Body of pancreas (tissue), 4 donors: ENCODE measurements at regions of chr18 and their contacts with region 1.

Region 1: GRCh38 chr18:54647176-54647575 is 56.1 kb downstream of the DYNAP start:
- DNase-seq: peak; percentile 25 to 54 (median 32)
- ATAC-seq: peak; percentile 55
- H3K4me3 ChIP-seq: no peak overlapping the region
- H3K27ac ChIP-seq: no peak overlapping the region
- H3K4me1 ChIP-seq: no peaks in the 10 kb centered on the region
- H3K27me3 ChIP-seq: no peaks in the 10 kb centered on the region
- CTCF ChIP-seq: peak; percentile 13 to 74 (median 63)
- POLR2A ChIP-seq: no peak

Region 2: DNA sequence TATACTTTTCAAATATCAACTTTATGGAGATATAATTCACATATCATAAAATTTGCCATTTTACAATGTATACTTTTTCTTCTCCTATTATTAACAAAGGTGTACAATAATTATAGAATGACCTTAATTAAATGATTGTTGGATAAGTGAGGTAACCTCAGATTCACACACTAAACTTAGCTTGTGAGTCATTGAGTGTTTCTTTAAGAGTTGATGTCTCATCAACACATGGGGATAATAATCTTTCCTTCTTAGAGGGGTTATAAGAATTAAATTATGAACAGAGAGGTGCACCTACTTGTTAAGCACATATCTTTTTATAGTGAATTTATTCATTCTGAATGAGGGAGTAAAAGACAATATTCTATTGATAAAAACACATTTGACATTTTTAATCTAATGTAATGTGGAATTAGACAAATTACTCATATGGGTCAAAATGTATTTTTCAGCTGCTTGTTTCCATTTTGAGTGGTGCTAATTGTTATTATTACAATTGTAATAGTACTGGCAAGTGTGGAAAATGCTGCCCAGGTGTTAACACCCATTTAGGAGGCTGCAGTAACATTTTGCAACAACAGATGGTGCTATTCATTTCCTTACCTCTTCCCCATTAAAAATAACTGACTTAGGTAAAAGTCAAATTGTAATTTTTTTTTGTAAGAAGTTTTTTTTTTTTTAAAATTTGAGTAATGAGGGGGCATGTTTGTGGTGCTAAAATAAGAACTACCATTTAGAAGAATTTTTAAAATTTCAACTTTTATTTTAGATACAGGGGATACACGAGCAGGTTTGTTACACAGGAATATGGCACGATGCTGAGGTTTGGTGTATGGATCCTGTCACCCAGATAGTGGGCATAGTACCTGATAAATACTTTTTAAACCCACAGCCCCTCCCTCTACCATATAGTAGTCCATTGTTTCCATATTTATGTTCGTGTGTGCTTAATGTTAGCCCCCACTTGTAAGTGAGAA is 88.3 kb before region 1 on chr18:
- intact Hi-C with region 1: loop called (anchors 10 kb)
- DNase-seq: peak in 2 of 4 donors; percentile 28 to 33
- ATAC-seq: no peak
- H3K4me3 ChIP-seq: no peak overlapping the region
- H3K27ac ChIP-seq: no peak overlapping the region
- H3K4me1 ChIP-seq: no peaks in the 10 kb centered on the region
- H3K27me3 ChIP-seq: no peaks in the 10 kb centered on the region
- CTCF ChIP-seq: peak; percentile 25 to 89 (median 73)
- POLR2A ChIP-seq: no peak

Region 3: DNA sequence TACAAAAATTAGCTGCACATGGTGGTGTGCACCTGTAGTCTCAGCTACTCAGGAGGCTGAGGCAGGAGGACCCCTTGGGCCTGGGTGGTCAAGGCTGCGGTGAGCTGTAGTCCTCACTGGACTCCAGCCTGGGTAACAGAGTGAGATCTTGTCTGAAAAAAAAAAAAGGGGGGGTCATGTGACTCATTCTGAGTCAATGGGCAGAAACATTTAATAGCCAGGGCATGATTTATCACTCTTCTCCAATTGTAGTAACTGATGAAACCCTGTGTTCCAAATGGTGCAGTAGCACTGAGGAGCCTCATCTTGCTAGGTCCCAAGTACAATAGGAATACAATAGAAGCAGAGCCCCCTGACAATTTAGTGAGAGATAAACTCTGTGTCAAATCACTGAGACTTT is 391.0 kb after region 1 on chr18:
- intact Hi-C with region 1: no loop called
- DNase-seq: no peak
- ATAC-seq: no peak
- H3K4me3 ChIP-seq: no peak overlapping the region
- H3K27ac ChIP-seq: no peak overlapping the region
- H3K4me1 ChIP-seq: no peaks in the 10 kb centered on the region
- H3K27me3 ChIP-seq: no peaks in the 10 kb centered on the region
- CTCF ChIP-seq: no peak
- POLR2A ChIP-seq: no peak